Heart right ventricle (tissue), 16 donors: ENCODE measurements at regions of chr18 and their contacts with region 1.

Region 1: GRCh38 chr18:46411867-46412690 is 244.9 kb downstream of the LOXHD1 start:
- DNase-seq: peak; percentile 40 to 63
- ATAC-seq: peak; percentile 68 to 88 (median 82)
- H3K4me3 ChIP-seq: peak overlapping the region in 1 of 10 donors; percentile 9
- H3K27ac ChIP-seq: peak overlapping the region; percentile 61 to 94 (median 86)
- H3K4me1 ChIP-seq: peaks cover 5 to 90% (median 55%) of the 10 kb centered on the region in 9 donors
- H3K27me3 ChIP-seq: no peaks in the 10 kb centered on the region
- CTCF ChIP-seq: no peak

Region 2: GRCh38 chr18:46226461-46226860 is 185.6 kb before region 1 on chr18:
- intact Hi-C with region 1: no loop called
- DNase-seq: no peak
- ATAC-seq: no peak
- H3K4me3 ChIP-seq: no peak overlapping the region
- H3K27ac ChIP-seq: no peak overlapping the region
- H3K4me1 ChIP-seq: peaks cover 0 to 47% (median 35%) of the 10 kb centered on the region in 9 donors
- H3K27me3 ChIP-seq: no peaks in the 10 kb centered on the region
- CTCF ChIP-seq: no peak

Region 3: DNA sequence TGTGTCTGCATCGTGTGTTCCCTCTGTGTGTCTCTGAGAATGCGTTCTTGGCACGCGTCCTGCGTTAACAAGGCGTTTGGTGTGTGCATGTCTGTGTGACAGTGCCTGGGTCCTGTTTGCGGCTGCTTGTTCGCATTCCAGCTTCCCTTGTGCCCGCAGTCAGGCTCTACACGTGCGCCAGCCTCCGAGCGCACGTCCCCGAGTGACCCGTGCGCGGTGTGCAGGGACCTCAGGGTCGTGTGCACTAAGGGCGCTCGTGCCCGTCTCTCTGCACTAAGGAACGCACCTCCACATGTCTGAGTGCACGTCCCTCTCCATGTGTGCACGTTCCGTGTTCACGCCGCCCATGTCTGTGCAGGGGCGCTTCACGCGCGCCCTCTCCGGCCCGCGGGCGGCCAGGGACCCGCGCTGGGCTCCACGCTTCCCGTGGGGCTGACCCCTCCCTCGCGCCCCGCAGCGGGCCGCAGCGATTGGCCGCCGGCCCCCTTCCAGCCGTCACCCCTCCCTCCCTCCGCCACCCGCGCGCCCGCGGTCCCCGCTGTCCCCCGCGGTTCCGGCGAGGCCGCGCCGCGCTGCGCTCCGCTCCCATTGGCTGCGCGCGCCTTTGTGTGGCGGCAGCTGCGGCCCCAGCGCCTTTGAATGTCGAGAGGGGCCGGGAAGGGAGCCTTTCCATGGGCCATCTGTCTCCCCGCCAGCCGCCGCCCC is 78.5 kb before region 1 on chr18:
- intact Hi-C with region 1: loop called in 4 of 10 experiments (anchors 5 to 10 kb)
- DNase-seq: peak; percentile 42 to 64
- ATAC-seq: peak; percentile 66 to 84 (median 74)
- H3K4me3 ChIP-seq: peak overlapping the region; percentile 38 to 85 (median 66)
- H3K27ac ChIP-seq: peak overlapping the region in 6 of 10 donors; percentile 32 to 77 (median 65)
- H3K4me1 ChIP-seq: peaks cover 10 to 46% (median 33%) of the 10 kb centered on the region in 9 donors
- H3K27me3 ChIP-seq: peaks cover 0 to 64% (median 0%) of the 10 kb centered on the region in 7 donors
- CTCF ChIP-seq: peak in 1 of 9 donors; percentile 4

Region 4: GRCh38 chr18:46672062-46672970 is 260.2 kb after region 1 on chr18:
- intact Hi-C with region 1: no loop called
- DNase-seq: no peak
- ATAC-seq: no peak
- H3K4me3 ChIP-seq: no peak overlapping the region
- H3K27ac ChIP-seq: no peak overlapping the region
- H3K4me1 ChIP-seq: no peaks in the 10 kb centered on the region
- H3K27me3 ChIP-seq: peaks cover 0 to 8% (median 0%) of the 10 kb centered on the region in 7 donors
- CTCF ChIP-seq: no peak